Transverse colon (tissue), 4 donors: ENCODE measurements at regions of chr11 and their contacts with region 1.

Region 1: DNA sequence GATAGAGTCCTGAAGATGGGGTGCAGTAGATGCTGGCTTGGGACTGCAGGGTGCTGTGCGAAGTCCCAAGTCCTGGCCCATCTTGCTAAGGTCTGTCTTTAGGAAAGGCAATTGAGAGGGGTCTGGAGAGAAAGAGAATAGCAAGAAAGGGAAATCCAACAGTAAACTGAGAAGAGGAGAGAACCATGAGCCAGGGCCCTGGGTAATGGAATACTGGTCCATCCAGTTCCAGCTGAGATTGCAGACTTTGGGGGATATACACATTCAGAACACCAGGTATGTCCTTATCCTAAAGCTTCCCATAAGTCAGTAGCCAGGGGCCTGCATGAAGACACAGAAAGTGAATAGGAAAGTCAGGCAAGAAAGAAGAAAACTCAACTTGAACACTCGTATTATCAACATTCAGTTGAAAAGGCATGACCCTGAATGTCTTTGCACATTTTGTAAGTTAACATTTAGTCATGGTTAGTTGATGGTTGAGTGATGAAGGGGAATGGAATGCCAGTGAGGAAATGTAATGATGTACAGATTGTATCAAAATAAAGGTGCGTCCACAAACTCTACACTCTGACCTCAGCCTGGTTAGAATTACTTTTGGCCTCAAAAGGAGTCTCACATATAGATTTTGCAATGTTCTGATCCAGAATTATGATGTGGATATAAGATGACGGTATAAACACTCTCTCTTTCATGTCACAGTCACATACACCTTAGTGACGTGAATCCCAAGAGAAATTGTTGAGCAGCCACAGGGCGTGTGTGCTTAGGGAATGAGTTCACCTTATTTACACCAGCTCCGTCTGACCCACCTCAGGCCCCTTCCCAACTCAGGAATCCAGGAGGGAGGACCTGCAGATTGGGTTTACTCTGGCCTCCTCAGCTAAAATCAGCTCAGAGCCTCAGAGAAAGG is 100.3 kb downstream of the RDX start:
- DNase-seq: peak; percentile 20
- H3K4me3 ChIP-seq: no peak overlapping the region
- H3K27ac ChIP-seq: no peak overlapping the region
- H3K4me1 ChIP-seq: peaks cover 0 to 4% (median 3%) of the 10 kb centered on the region in 4 donors
- H3K27me3 ChIP-seq: no peaks in the 10 kb centered on the region
- CTCF ChIP-seq: no peak
- EP300 ChIP-seq: no peak
- POLR2A ChIP-seq: no peak

Region 2: GRCh38 chr11:109946322-109946846 is 249.7 kb before region 1 on chr11:
- in situ Hi-C with region 1: loop called in 1 of 4 experiments (anchors 25 kb)
- intact Hi-C with region 1: no loop called
- DNase-seq: peak; percentile 88
- H3K4me3 ChIP-seq: peak overlapping the region in 1 of 4 donors; percentile 23
- H3K27ac ChIP-seq: peak overlapping the region; percentile 33 to 56 (median 50)
- H3K4me1 ChIP-seq: peaks cover 0 to 9% (median 5%) of the 10 kb centered on the region in 4 donors
- H3K27me3 ChIP-seq: no peaks in the 10 kb centered on the region
- CTCF ChIP-seq: peak; percentile 86 to 96 (median 90)
- EP300 ChIP-seq: no peak
- POLR2A ChIP-seq: no peak

Region 3: DNA sequence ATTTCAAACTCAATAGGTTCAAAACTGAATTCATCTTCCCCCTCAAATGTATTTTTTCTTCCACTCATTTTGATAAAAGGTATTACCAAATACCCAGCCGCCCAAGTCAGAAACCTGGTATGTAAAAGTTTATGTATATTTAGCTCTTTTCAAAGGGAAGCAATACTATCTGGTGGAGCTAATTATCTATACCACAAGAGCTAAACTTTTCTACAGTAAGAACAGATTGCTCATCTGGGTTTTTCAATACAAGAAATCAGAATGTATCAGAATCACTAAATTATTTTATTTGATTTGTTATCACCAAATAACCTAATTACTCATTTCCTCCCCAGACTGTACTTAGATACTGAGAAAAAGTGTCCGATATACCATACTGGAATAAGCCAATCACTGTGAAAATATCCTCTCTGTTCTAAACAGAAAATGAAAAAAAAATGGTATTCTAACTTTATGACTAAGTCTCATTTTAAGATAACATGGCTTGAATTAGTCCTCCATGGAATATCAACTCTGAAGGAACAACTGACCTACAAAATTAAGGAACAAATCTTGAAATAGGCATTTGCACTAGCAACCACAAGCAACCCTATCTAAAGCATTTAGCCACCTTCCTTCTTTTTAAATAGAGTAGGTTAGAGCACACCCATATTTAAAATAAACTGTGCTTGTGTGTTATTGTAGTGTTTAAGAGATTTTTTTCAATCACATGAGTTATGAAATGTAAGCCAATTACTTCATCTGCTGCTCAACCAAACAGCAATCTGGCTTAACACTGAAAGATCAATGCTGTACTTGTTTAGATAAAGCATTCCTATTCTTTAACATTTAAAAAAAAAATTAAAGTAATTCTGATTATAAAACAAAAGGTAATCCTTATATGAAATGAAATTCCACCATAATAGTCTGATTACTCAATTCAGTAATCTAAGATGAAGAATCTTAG is 65.4 kb after region 1 on chr11:
- in situ Hi-C with region 1: no loop called
- intact Hi-C with region 1: no loop called
- DNase-seq: no peak
- H3K4me3 ChIP-seq: no peak overlapping the region
- H3K27ac ChIP-seq: no peak overlapping the region
- H3K4me1 ChIP-seq: no peaks in the 10 kb centered on the region
- H3K27me3 ChIP-seq: no peaks in the 10 kb centered on the region
- CTCF ChIP-seq: no peak
- EP300 ChIP-seq: no peak
- POLR2A ChIP-seq: no peak

Region 4: DNA sequence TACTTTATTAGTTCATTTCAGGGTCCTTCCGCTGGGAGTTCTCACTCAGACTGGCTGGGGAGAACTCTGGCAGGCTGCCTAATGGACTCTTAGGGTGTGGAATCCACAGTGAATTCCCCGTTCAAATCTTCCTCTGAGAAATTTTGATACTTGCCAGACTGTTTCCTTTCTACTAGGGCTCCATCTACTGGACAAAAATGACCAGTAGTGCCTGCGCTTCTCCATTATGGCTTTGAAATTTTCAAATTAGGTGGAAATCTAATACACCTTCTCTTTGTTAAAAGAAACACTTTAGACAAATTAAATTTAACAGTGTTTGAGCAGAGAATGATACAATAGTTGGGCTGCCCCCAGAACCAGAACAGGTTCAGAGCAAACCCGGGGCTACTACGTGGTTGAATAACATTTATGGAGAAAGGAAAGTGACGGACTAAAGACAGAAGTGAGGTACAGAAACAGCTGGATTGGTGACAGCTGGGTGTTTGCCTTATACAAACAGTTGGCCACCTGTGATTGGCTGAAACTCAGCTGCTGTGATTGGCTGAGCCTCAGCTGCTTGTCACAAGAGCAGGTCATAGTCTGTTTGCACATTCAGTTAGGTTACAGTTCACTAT is 180.7 kb after region 1 on chr11:
- in situ Hi-C with region 1: loop called (anchors 5 to 10 kb)
- intact Hi-C with region 1: loop called (anchors 5 kb)
- DNase-seq: peak; percentile 68
- H3K4me3 ChIP-seq: peak overlapping the region in 1 of 4 donors; percentile 9
- H3K27ac ChIP-seq: peak overlapping the region in 3 of 4 donors; percentile 26 to 68 (median 48)
- H3K4me1 ChIP-seq: peaks cover 0 to 11% (median 9%) of the 10 kb centered on the region in 4 donors
- H3K27me3 ChIP-seq: no peaks in the 10 kb centered on the region
- CTCF ChIP-seq: peak; percentile 68 to 79 (median 74)
- EP300 ChIP-seq: no peak
- POLR2A ChIP-seq: no peak

Region 5: DNA sequence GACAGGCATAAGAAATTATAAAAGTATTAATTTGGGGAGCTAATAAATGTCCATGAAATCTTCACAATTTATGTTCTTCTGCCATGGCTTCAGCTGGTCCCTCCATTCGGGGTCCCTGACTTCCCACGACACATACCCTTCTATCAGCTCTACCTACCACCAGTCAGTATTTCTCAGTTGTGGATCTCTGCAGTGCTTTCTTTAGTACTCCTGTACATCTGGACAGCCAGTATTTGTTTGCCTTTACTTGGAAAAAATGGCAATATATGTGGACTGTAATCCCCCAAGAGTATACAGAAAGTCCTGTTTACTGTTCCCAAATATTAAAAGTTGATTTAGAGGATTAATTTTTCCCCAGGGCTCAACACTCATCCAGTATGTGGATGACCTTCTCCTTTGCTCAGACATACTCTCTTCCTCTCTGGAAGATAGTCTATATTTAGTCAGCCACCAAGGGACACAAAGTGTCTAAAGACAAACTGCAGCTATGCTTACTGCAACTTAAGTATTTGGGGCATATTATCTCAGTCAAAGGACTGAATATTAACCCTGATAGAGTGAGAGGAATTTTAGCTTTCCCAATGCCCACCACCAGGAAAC is 226.3 kb after region 1 on chr11:
- in situ Hi-C with region 1: no loop called
- intact Hi-C with region 1: loop called (anchors 2 kb)
- DNase-seq: no peak
- H3K4me3 ChIP-seq: no peak overlapping the region
- H3K27ac ChIP-seq: no peak overlapping the region
- H3K4me1 ChIP-seq: no peaks in the 10 kb centered on the region
- H3K27me3 ChIP-seq: no peaks in the 10 kb centered on the region
- CTCF ChIP-seq: no peak
- EP300 ChIP-seq: no peak
- POLR2A ChIP-seq: no peak

Region 6: DNA sequence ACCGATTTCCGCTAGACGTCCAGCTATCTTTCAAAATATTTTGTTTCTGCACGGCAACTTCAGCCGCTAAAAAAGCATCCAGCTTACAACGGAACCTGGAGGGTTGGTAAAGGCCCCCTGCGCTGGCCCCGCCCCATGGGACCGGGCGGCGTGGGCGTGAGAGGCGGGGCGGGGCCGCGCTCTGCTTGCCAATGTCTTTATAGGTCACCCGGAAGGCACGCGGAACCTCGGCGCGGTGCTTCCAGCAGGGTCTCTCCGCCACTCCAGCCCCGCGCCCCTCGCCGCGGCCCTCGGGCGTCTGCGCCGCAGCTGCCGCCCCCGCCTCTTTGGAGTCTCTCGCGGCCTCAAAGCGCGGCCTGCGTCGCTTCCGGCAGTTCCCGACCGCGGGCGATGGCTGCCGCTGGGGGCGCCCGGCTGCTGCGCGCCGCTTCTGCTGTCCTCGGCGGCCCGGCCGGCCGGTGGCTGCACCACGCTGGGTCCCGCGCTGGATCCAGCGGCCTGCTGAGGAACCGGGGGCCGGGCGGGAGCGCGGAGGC is 233.7 kb after region 1 on chr11 and contains the start of gene FDX1:
- in situ Hi-C with region 1: loop called in 1 of 4 experiments (anchors 10 kb)
- intact Hi-C with region 1: no loop called
- DNase-seq: peak; percentile 84
- H3K4me3 ChIP-seq: peak within 1 kb of the TSS; percentile 65 to 96 (median 74)
- H3K27ac ChIP-seq: peak within 1 kb of the TSS; percentile 91 to 97 (median 94)
- H3K4me1 ChIP-seq: peaks cover 18 to 35% (median 29%) of the 10 kb centered on the region in 4 donors
- H3K27me3 ChIP-seq: no peaks in the 10 kb centered on the region
- CTCF ChIP-seq: peak; percentile 30 to 75 (median 63)
- EP300 ChIP-seq: no peak
- POLR2A ChIP-seq: peak; percentile 34
- total RNA-seq, gene FDX1: 25.4 to 28.9 (median 26.8) TPM

Region 7: GRCh38 chr11:111230122-111230465 is 1034.0 kb after region 1 on chr11:
- in situ Hi-C with region 1: loop called in 1 of 4 experiments (anchors 25 kb)
- intact Hi-C with region 1: no loop called
- DNase-seq: no peak
- H3K4me3 ChIP-seq: peak overlapping the region in 2 of 4 donors; percentile 27 to 61
- H3K27ac ChIP-seq: peak overlapping the region in 1 of 4 donors; percentile 68
- H3K4me1 ChIP-seq: peaks cover 0 to 12% (median 0%) of the 10 kb centered on the region in 4 donors
- H3K27me3 ChIP-seq: no peaks in the 10 kb centered on the region
- CTCF ChIP-seq: no peak
- EP300 ChIP-seq: no peak
- POLR2A ChIP-seq: no peak

Region 8: DNA sequence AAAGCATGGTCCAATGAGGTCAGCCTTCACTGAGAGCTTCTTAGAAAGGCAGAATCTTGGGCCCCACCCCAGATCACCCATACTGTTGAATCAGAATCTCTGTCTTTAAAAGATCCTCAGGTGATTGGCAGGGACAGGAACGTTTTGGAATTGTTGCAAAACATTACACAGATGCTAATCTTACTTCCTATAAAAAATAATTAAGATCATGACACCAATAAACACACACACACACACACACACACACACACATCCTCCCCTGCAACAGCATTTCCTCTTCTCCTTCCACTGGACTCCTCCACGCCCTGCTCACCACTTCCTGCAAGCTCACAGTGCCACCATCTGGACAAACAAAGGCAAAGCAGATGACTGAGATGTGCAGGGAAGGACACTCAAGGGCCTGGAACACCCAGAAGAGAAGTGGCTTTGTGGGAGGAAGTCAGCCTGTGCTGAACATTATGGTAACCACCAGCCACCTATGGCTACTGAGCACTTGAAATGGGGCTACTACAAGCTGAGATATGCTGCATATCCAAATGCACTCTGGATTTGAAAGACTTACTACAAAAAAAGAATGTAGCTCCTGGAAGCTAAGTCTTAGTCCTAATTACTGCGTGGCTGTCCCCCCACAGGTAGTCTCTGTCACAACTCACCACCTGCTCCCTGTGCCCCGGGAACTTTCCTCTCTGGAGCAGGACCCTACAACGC is 1250.5 kb after region 1 on chr11:
- in situ Hi-C with region 1: loop called in 1 of 4 experiments (anchors 25 kb)
- intact Hi-C with region 1: no loop called
- DNase-seq: peak; percentile 83
- H3K4me3 ChIP-seq: no peak overlapping the region
- H3K27ac ChIP-seq: peak overlapping the region in 1 of 4 donors; percentile 44
- H3K4me1 ChIP-seq: peaks cover 0 to 9% (median 4%) of the 10 kb centered on the region in 4 donors
- H3K27me3 ChIP-seq: no peaks in the 10 kb centered on the region
- CTCF ChIP-seq: peak; percentile 71 to 97 (median 75)
- EP300 ChIP-seq: no peak
- POLR2A ChIP-seq: no peak